ENCODE measurements at regions of chr5 and their contacts with region 1.

Region 1: DNA sequence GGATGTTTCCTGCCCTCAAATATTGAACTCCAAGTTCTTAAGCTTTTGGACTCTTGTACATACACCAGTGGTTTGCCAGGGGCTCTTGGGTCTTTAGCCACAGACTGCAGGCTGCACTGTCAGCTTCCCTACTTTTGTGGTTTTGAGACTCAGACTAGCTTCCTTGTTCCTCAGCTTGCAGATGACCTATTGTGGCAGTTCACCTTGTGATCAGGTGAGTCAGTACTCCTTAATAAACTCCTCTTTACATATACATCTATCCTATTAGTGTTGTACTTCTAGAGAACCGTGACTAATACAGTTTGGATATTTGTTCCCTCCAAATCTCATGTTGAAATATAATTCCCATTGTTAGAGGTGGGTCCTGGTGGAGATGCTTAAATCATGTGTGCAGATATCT is 681.9 kb upstream of the ARRDC3 start:
- DNase-seq: no peak
- ATAC-seq: no peak
- H3K4me3 ChIP-seq: no peak overlapping the region
- H3K4me3 Mint-ChIP-seq: no peak overlapping the region
- H3K27ac ChIP-seq: no peak overlapping the region
- H3K27ac Mint-ChIP-seq: no peak overlapping the region
- H3K4me1 ChIP-seq: no peaks in the 10 kb centered on the region
- H3K4me1 Mint-ChIP-seq: no peaks in the 10 kb centered on the region
- H3K27me3 ChIP-seq: no peaks in the 10 kb centered on the region
- H3K27me3 Mint-ChIP-seq: no peaks in the 10 kb centered on the region

Region 2: DNA sequence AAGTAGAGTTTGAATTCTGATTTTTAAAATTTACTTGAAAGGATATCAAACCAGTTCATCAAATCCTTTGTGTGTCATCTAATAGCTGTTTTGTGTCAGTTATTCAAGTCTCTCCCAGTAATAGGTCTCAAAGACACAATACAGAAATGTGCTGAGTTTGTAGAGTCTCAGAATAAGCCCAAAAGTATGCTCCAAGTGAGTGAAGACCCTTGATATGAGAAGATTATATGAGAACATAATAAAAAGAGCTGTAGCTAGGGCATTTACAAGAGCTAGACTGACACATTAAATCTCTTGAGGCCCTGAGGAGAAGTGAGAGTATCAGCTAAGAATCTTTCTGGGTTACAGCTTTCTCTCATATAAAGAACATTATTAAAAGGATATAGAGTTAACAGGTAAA is 39.1 kb after region 1 on chr5:
- CTCF ChIA-PET with region 1: no interaction called
- POLR2A ChIA-PET with region 1: interaction called in 1 of 2 experiments, 10 read pairs
- DNase-seq: no peak
- ATAC-seq: no peak
- H3K4me3 ChIP-seq: no peak overlapping the region
- H3K4me3 Mint-ChIP-seq: no peak overlapping the region
- H3K27ac ChIP-seq: no peak overlapping the region
- H3K27ac Mint-ChIP-seq: no peak overlapping the region
- H3K4me1 ChIP-seq: no peaks in the 10 kb centered on the region
- H3K4me1 Mint-ChIP-seq: no peaks in the 10 kb centered on the region
- H3K27me3 ChIP-seq: no peaks in the 10 kb centered on the region
- H3K27me3 Mint-ChIP-seq: no peaks in the 10 kb centered on the region